Right ventricle myocardium inferior (tissue), 1 donor: ENCODE measurements at regions of chr9 and their contacts with region 1.

Region 1: GRCh38 chr9:136363606-136364370 is at the start of gene DNLZ:
- DNase-seq: peak; percentile 95
- ATAC-seq: peak; percentile 63
- total RNA-seq, gene DNLZ: 40.6 TPM

Region 2: GRCh38 chr9:136312436-136312835 is 51.4 kb before region 1 on chr9:
- intact Hi-C with region 1: loop called (anchors 2 kb)
- DNase-seq: peak; percentile 60
- ATAC-seq: peak; percentile 73

Region 3: GRCh38 chr9:136339173-136339957 is 24.4 kb before region 1 on chr9:
- intact Hi-C with region 1: loop called (anchors 1 kb)
- DNase-seq: peak; percentile 90
- ATAC-seq: no peak

Region 4: DNA sequence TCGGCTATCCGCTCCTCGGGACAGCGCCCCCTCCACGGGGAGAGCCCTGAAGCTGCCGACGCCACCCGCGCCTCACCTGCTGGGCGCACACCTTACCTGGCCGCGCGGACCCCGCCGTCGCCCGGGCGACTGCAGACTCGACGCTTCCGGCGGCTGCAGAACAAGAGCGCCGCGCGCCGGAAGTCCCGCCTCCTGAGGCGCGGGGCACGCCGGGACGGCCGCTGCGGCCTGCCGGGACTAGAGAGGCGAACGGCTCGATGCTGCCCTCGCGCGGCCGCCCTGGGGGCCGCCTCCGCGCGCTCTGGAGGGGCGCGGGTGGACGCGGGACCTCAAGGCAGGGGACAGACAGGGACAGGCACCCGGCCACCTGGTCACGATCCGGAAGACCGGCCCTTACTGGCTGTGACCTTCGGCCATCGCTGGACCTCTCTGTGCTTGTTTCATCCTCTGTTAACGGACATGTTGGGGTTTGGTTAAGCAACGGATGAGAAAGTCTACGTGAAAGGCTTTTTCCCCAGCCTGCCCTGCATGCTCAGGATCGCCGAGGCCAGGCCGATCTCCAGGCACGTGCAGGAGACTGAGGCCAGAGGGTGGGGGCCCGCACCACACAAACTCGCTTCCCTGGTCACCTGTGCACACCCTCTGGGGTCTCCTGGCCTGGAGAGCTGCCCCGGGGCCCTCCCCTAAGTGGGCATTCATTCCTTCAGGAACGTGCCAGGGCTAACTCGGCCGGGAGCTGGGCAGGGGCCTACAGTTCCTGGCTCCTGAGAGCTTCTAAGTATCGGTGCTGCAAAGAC is 36.4 kb after region 1 on chr9 and contains the start of gene SNAPC4:
- intact Hi-C with region 1: no loop called
- DNase-seq: peak; percentile 96
- ATAC-seq: peak; percentile 91
- total RNA-seq, gene SNAPC4: 4.0 TPM

Region 5: DNA sequence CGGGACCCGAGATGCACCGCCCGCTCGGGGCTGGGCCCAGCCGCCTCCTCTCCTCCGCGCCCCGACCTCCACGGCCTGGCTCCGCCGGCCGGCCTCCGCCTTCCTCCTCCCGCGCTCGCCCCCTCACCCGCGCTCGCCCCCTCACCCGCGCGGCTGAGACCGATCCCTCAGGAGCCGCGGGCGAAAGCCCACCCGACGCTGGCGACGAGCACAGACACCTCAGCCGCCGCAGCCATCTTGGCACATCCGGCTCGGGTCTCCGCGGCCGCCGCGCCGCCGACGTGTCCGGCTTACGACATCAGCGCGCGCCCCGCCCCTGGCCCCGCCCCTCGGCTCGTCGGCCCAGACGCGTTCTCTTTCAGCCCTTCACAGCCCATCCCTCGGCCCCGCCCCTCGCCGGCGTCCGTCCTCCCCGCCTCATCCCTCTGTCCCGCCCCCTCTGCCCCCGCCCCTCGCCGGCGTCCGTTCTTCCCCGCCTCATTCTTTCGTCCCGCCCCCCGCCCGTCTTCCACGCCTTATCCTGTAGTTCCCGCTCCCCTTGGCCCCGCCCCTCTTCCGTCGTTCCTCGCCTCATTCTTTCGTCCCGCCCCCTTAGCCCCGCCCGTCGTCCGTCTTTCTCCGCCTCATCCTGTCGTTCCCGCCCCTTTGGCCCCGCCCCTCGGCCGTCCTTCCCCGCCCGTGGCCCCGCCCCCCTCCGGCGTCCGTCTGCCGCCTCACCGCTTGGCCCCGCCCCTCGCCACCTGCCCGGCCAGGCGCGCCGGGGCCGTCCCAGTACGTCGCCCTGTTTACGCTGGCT is 119.2 kb after region 1 on chr9 and contains the start of gene SEC16A:
- intact Hi-C with region 1: loop called (anchors 1 kb)
- DNase-seq: peak; percentile 100
- ATAC-seq: peak; percentile 89
- total RNA-seq, gene SEC16A: 22.3 TPM